Transverse colon (tissue), 4 donors: ENCODE measurements at regions of chr5 and their contacts with region 1.

Region 1: GRCh38 chr5:1737790-1738405 is 61.7 kb downstream of the MRPL36 start:
- DNase-seq: no peak
- H3K4me3 ChIP-seq: no peak overlapping the region
- H3K27ac ChIP-seq: no peak overlapping the region
- H3K4me1 ChIP-seq: no peaks in the 10 kb centered on the region
- H3K27me3 ChIP-seq: peaks cover 3% of the 10 kb centered on the region
- CTCF ChIP-seq: peak; percentile 38 to 58 (median 45)
- EP300 ChIP-seq: no peak
- POLR2A ChIP-seq: no peak

Region 2: GRCh38 chr5:1692381-1692780 is 45.5 kb before region 1 on chr5:
- in situ Hi-C with region 1: no loop called
- intact Hi-C with region 1: loop called (anchors 1 kb)
- DNase-seq: no peak
- H3K4me3 ChIP-seq: no peak overlapping the region
- H3K27ac ChIP-seq: no peak overlapping the region
- H3K4me1 ChIP-seq: no peaks in the 10 kb centered on the region
- H3K27me3 ChIP-seq: no peaks in the 10 kb centered on the region
- CTCF ChIP-seq: no peak
- EP300 ChIP-seq: no peak
- POLR2A ChIP-seq: no peak

Region 3: DNA sequence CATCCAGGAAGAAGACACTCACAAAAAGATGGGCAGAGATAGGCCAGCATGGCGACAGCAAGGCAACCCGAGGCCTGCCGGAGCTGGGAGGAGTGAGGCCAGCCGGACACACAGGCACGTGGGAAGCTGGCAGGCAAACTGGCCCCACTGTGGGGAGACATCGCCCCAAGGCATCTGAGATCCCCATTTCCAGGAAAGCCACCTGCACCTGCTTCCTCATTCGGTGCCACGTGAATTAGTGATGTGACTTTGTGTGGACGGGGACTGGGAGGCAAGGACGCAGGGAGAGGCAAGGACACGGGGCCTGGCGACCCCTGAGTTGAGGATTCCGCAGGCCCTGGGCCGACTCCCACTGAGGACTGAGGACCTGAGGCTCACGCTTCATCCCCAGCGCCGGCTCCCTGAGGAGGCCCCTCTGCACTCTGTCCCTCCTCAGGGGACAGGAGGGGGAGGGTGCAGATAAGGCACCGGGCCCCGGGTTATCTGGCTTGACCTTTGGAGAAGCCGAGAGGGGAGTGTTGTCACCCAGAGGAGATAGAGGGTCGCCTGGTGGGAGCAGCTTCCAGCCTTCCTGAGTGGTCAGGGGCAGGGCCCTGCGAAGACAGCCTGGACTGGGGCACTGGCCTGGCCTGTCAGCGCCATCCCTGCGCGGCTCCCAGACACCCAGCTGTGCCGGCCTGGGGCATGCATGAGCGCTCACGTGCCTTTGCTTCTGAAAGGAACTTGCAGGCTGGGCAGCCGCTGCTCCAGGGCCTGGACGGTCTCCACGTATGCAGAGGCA is 103.0 kb after region 1 on chr5:
- in situ Hi-C with region 1: no loop called
- intact Hi-C with region 1: no loop called
- DNase-seq: no peak
- H3K4me3 ChIP-seq: no peak overlapping the region
- H3K27ac ChIP-seq: no peak overlapping the region
- H3K4me1 ChIP-seq: no peaks in the 10 kb centered on the region
- H3K27me3 ChIP-seq: peaks cover 69% of the 10 kb centered on the region
- CTCF ChIP-seq: no peak
- EP300 ChIP-seq: no peak
- POLR2A ChIP-seq: no peak

Region 4: GRCh38 chr5:2017540-2018389 is 279.9 kb after region 1 on chr5:
- in situ Hi-C with region 1: loop called in 1 of 4 experiments (anchors 25 kb)
- intact Hi-C with region 1: no loop called
- DNase-seq: no peak
- H3K4me3 ChIP-seq: no peak overlapping the region
- H3K27ac ChIP-seq: no peak overlapping the region
- H3K4me1 ChIP-seq: no peaks in the 10 kb centered on the region
- H3K27me3 ChIP-seq: no peaks in the 10 kb centered on the region
- CTCF ChIP-seq: peak; percentile 14 to 31 (median 29)
- EP300 ChIP-seq: no peak
- POLR2A ChIP-seq: no peak